ENCODE measurements at regions of chr2 and their contacts with region 1.

Region 1: DNA sequence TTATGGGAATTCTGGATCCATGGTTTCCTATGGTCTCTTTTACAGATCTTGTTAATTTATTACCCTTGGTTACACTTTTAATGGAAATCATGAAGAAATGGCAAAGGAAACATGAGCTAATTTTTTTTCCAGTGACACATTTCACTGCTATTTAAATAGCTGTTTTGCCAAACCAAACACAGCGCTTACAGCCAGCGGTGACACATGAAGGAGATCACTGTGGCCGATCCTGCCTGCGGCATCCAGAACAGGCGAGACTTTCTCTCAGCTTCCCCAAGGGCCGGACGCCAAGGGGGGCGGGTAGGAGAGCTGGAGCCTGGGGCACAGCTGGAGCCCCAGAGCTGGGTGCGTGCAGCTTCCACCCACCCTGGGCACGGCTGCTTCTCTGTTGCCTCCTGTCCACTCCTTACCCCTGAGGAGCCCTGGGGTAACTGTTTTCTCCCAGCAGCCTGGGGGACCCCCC is 81.4 kb upstream of the PKDCC start:
- DNase-seq: peak; percentile 72 to 83
- ATAC-seq: peak; percentile 86 to 87
- H3K4me3 ChIP-seq: no peak overlapping the region
- H3K27ac ChIP-seq: peak overlapping the region; percentile 70 to 80 (median 73)
- H3K4me1 ChIP-seq: peaks cover 32 to 34% of the 10 kb centered on the region in 2 donors
- H3K27me3 ChIP-seq: no peaks in the 10 kb centered on the region
- CTCF ChIP-seq: no peak
- POLR2A ChIP-seq: no peak

Region 2: GRCh38 chr2:42047488-42048298 is 81.2 kb after region 1 on chr2 and contains the start of gene PKDCC:
- in situ Hi-C with region 1: no loop called
- intact Hi-C with region 1: loop called (anchors 2 kb)
- DNase-seq: peak; percentile 77 to 86
- ATAC-seq: peak; percentile 32 to 44
- H3K4me3 ChIP-seq: peak within 1 kb of the TSS; percentile 84 to 90 (median 85)
- H3K27ac ChIP-seq: peak within 1 kb of the TSS; percentile 94 to 99 (median 98)
- H3K4me1 ChIP-seq: peaks cover 19 to 33% of the 10 kb centered on the region in 2 donors
- H3K27me3 ChIP-seq: no peaks in the 10 kb centered on the region
- CTCF ChIP-seq: no peak
- POLR2A ChIP-seq: peak; percentile 87 to 89
- total RNA-seq, gene PKDCC: 152 to 246 (median 186) TPM

Region 3: DNA sequence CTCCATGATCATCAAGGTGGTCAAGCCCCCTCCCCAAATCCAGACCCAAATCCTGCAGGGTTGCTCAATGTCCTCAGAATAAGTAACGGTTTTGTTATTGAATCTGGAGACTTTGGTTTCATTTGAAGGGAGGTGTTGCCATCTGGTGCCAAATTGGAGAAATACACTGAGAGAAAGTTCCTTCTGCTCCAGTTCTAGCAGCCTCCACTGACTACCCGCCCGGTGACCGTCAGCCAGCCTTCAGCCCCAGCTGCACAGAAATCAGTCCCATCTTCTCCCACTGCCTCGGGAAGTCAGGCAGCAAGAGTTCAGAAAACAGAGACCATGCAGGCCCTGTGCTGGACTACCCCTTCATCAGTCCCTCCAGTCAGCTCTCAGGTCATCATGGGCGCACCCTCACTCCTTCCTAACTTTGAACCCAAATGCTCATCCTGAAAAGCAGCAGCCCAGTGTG is 120.1 kb after region 1 on chr2:
- in situ Hi-C with region 1: no loop called
- intact Hi-C with region 1: no loop called
- DNase-seq: peak in 1 of 2 donors; percentile 47
- ATAC-seq: peak; percentile 66
- H3K4me3 ChIP-seq: no peak overlapping the region
- H3K27ac ChIP-seq: no peak overlapping the region
- H3K4me1 ChIP-seq: peaks cover 5 to 8% of the 10 kb centered on the region in 2 donors
- H3K27me3 ChIP-seq: no peaks in the 10 kb centered on the region
- CTCF ChIP-seq: peak; percentile 72 to 89 (median 82)
- POLR2A ChIP-seq: no peak